Transverse colon (tissue), 4 donors: ENCODE measurements at regions of chr11 and their contacts with region 1.

Region 1: GRCh38 chr11:122367809-122368231 is 251.8 kb upstream of the BLID start:
- DNase-seq: no peak
- H3K4me3 ChIP-seq: no peak overlapping the region
- H3K27ac ChIP-seq: peak overlapping the region in 3 of 4 donors; percentile 22 to 41 (median 31)
- H3K4me1 ChIP-seq: no peaks in the 10 kb centered on the region
- H3K27me3 ChIP-seq: no peaks in the 10 kb centered on the region
- CTCF ChIP-seq: no peak
- EP300 ChIP-seq: no peak
- POLR2A ChIP-seq: no peak

Region 2: DNA sequence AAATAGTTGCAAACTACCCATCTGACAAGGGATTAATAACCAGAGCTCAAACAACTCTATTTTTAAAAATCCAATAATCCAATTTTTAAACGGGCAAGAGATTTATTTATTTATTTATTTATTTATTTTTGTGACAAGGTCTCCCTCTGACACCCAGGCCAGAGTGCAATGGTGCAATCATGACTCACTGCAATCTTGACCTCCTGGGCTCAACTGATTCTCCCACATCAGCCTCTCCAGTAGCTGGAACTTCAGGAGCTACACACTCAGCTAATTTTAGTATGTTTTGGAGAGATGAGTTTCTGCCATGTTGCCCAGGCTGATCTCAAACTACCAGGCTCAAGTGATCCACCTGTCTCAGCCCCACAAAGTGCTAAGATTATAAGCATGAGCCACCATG is 15.4 kb after region 1 on chr11:
- in situ Hi-C with region 1: no loop called
- intact Hi-C with region 1: loop called (anchors 1 kb)
- DNase-seq: no peak
- H3K4me3 ChIP-seq: no peak overlapping the region
- H3K27ac ChIP-seq: no peak overlapping the region
- H3K4me1 ChIP-seq: no peaks in the 10 kb centered on the region
- H3K27me3 ChIP-seq: no peaks in the 10 kb centered on the region
- CTCF ChIP-seq: no peak
- EP300 ChIP-seq: no peak
- POLR2A ChIP-seq: no peak

Region 3: DNA sequence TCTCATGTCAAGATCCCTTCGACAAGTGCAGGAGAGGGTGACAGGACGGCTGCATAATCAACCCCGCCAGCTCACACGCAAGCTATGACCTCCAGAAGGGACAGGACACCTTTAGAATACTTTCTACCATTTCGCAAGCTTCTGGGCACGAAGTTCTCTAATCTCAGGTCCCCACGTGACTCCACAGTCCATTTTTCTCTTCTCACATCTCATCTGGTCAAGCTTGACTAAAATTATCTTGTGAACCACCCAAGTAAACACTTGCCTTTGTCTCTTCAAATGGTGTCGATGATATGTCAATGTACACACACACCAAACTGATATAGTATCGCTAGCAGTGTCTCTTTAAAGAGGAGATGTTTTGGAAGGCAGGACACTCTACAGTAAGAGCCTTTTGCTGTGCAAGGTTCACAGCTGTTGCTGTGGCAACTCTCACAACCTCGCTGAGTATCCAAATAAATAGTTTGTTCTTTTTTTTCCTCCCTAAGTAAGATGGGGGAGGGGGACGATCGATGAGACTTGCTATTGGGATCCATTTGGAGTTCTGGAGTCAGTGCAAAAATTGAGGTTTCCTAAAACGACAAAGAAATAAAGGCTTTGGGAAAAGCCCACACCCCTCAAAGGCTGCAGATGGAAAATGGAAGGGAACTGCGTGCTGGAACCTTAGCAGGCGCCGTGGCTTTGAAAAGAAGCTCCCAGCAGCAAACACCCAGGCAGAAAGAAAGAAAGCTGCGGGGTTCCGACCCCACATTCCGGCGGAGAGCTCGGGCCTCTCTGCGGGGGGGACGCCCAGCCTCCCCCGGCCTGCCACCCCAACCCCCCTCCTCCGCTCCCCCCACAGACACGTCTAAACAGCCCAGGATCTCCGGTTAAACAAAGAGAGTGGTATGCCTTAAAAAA is 72.3 kb after region 1 on chr11:
- in situ Hi-C with region 1: no loop called
- intact Hi-C with region 1: no loop called
- DNase-seq: no peak
- H3K4me3 ChIP-seq: peak overlapping the region; percentile 18 to 40 (median 24)
- H3K27ac ChIP-seq: peak overlapping the region; percentile 2 to 69 (median 57)
- H3K4me1 ChIP-seq: peaks cover 0 to 10% (median 0%) of the 10 kb centered on the region in 4 donors
- H3K27me3 ChIP-seq: peaks cover 6% of the 10 kb centered on the region
- CTCF ChIP-seq: no peak
- EP300 ChIP-seq: no peak
- POLR2A ChIP-seq: no peak

Region 4: GRCh38 chr11:122491509-122491908 is 123.7 kb after region 1 on chr11:
- in situ Hi-C with region 1: no loop called
- intact Hi-C with region 1: no loop called
- DNase-seq: no peak
- H3K4me3 ChIP-seq: no peak overlapping the region
- H3K27ac ChIP-seq: no peak overlapping the region
- H3K4me1 ChIP-seq: no peaks in the 10 kb centered on the region
- H3K27me3 ChIP-seq: no peaks in the 10 kb centered on the region
- CTCF ChIP-seq: no peak
- EP300 ChIP-seq: no peak
- POLR2A ChIP-seq: no peak